ENCODE measurements at regions of chrX and their contacts with region 1.

Region 1: GRCh38 chrX:37825209-37825842 is 22.0 kb downstream of the DYNLT3 start:
- DNase-seq: peak; percentile 73
- H3K4me3 ChIP-seq: no peak overlapping the region
- H3K27ac ChIP-seq: peak overlapping the region; percentile 60
- H3K4me1 ChIP-seq: peaks cover 53% of the 10 kb centered on the region
- CTCF ChIP-seq: peak; percentile 91

Region 2: DNA sequence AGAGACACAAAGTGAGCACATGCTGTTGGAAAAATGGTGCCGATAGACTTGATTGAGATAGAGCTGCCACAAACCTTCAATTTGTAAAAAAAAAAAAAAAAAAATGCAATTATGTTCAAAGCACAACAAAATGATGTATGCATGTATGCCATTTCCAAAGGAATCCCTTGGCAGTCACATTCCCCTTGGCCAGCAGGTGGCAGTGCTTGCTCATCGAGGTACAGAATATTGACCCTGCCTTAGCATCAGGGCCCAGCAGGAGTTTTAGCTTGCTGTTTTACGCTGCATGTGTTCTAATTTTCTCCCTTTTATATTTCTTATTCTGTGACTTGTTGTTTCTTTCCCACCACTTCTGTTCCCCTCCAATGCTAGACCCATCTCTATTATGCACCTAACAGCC is 80.0 kb before region 1 on chrX:
- CTCF ChIA-PET with region 1: interaction called, 46 read pairs
- POLR2A ChIA-PET with region 1: interaction called, 65 read pairs
- intact Hi-C with region 1: loop called (anchors 1 kb)
- DNase-seq: peak; percentile 83
- H3K4me3 ChIP-seq: no peak overlapping the region
- H3K27ac ChIP-seq: peak overlapping the region; percentile 14
- H3K4me1 ChIP-seq: peaks cover 20% of the 10 kb centered on the region
- CTCF ChIP-seq: peak; percentile 80

Region 3: GRCh38 chrX:37787423-37787869 is 37.9 kb before region 1 on chrX:
- CTCF ChIA-PET with region 1: interaction called, 3 read pairs
- POLR2A ChIA-PET with region 1: interaction called, 65 read pairs
- intact Hi-C with region 1: loop called (anchors 2 kb)
- DNase-seq: peak; percentile 66
- H3K4me3 ChIP-seq: peak overlapping the region; percentile 58
- H3K27ac ChIP-seq: peak overlapping the region; percentile 99
- H3K4me1 ChIP-seq: peaks cover 78% of the 10 kb centered on the region
- CTCF ChIP-seq: no peak

Region 4: DNA sequence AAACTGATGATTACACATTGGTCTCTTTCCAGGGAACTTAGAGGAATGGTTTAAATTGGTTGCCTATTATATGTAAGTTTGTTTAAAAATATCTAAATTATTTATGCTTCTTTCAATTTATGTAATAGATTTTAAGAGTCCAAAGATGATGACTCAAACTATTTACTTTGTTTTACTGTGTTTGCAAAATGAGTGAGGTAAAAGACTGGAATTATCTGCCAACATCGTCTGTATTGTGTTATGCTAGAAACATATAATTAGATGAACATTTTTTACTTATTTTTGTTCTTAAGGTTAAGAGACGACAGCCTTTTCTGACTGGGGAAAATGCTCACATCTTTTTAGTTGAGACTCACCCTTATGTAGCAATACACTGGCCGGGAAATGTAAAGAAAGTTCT is 129.9 kb after region 1 on chrX:
- CTCF ChIA-PET with region 1: no interaction called
- POLR2A ChIA-PET with region 1: no interaction called
- intact Hi-C with region 1: no loop called
- DNase-seq: no peak
- H3K4me3 ChIP-seq: no peak overlapping the region
- H3K27ac ChIP-seq: no peak overlapping the region
- H3K4me1 ChIP-seq: no peaks in the 10 kb centered on the region
- CTCF ChIP-seq: no peak